ENCODE measurements at regions of chr11 and their contacts with region 1.

Region 1: GRCh38 chr11:124644426-124645280 is 22.0 kb downstream of the TBRG1 start:
- DNase-seq: peak in 1 of 2 donors; percentile 79
- H3K4me3 ChIP-seq: peak overlapping the region in 1 of 2 donors; percentile 52
- H3K27ac ChIP-seq: peak overlapping the region; percentile 78 to 85
- H3K4me1 ChIP-seq: peaks cover 0 to 3% of the 10 kb centered on the region in 2 donors
- H3K27me3 ChIP-seq: no peaks in the 10 kb centered on the region
- CTCF ChIP-seq: peak; percentile 71 to 82 (median 75)

Region 2: DNA sequence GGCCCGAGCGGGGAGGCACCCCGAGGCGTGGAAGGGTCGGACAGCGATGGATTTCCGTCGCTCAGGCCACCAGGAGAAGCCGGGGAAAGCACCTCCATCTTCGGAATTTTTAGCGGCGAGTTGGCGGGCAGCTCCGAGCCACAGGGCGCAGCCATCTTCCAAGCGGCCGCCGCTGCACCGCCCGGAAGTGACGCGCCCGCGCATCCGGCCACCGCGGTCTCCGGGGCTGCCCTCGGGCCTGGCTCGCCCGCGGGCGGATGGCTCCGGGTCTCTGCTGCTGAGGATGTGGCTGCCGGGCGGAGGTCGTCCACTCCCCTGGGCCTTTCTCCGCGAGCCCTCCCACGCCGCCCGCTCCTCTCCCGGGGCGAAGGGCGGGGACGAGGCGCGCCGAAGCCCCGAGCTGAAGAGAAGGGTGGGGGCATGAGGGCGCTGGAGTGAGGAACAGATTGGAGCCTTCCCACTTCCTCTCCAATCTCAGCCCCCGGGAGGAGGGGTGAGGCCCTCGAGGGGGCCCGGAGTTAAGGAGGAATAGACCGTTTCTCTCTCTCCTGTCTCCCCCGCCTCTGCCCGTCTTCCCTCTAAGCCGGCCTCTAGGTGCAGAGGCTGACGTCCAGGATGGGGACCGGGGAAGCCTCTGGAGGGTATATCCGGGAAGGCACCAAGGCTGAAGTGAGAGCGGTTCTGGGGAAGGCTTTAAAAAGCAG is 155.7 kb after region 1 on chr11 and contains the start of gene MSANTD2:
- intact Hi-C with region 1: loop called (anchors 1 kb)
- DNase-seq: peak; percentile 19 to 87
- H3K4me3 ChIP-seq: peak within 1 kb of the TSS; percentile 81 to 98
- H3K27ac ChIP-seq: peak within 1 kb of the TSS; percentile 99
- H3K4me1 ChIP-seq: peaks cover 13 to 16% of the 10 kb centered on the region in 2 donors
- H3K27me3 ChIP-seq: no peaks in the 10 kb centered on the region
- CTCF ChIP-seq: no peak
- total RNA-seq, gene MSANTD2: 21.4 TPM

Region 3: GRCh38 chr11:124846071-124846719 is 201.5 kb after region 1 on chr11:
- intact Hi-C with region 1: no loop called
- DNase-seq: no peak
- H3K4me3 ChIP-seq: no peak overlapping the region
- H3K27ac ChIP-seq: no peak overlapping the region
- H3K4me1 ChIP-seq: peaks cover 0 to 5% of the 10 kb centered on the region in 2 donors
- H3K27me3 ChIP-seq: peaks cover 12% of the 10 kb centered on the region
- CTCF ChIP-seq: no peak

Measured in ascending aorta (tissue), 2 donors.